G401 (cell line): ENCODE measurements at regions of chr7 and their contacts with region 1.

Region 1: DNA sequence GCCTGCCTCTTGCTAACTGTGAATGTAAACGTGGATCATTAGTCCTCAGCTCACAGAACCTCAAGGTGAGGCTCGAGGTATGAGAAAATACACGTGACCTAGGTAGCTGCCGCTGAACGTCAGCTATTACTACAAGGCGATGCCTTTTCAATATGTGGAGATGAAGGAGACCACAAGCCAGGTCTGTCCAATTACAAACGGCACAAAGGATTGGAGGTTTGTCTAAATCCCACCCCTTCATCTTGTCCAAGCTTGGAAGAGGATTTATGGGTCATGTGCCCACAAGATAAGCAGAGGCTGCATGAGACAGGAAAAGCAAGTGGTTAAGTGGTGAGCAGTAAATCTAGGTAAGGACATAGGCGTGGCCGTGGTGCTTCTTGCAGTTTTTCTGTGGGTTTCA is 3.4 kb downstream of the H2BK1 start:
- DNase-seq: no peak

Region 2: GRCh38 chr7:151146761-151147160 is 60.2 kb before region 1 on chr7:
- in situ Hi-C with region 1: loop called (anchors 5 kb)
- DNase-seq: peak; percentile 40